ENCODE measurements at regions of chr1 and their contacts with region 1.

Region 1: DNA sequence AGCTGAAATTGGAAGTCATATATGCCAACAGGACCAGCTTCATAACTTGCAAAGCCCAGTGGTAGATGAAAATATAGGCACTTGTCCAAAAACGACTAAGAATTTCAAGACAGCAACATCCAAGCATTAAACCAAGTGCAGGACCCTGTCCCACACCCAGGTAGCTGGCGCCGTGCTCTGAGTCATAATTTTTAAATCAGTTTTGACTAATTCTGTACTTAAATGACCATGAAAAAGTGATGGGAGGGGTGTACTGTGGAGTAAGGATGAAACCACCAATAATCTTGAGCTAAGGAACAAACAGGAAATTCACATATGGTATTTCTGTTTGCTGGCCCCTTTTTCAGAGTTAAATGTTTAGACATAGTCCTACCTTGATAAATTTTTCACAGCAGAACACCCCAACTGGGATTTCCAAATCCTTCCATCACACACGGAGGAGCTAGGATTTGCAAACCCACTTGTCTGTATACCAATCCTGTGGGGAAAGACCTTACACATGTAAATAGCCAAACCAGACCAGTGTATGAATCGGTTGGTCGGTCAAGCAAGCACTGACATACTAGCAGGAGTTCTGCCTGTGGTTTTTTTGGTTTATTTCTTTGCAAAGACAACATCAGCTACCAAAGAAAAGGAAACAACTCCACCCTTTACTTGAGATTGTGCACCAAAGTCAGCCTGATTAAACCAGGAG is 235.7 kb upstream of the RAB4A start:
- DNase-seq: no peak
- H3K4me3 Mint-ChIP-seq: no peak overlapping the region
- H3K27ac Mint-ChIP-seq: no peak overlapping the region
- H3K4me1 Mint-ChIP-seq: peaks cover 29% of the 10 kb centered on the region
- H3K27me3 Mint-ChIP-seq: peaks cover 20% of the 10 kb centered on the region
- CTCF ChIP-seq: no peak

Region 2: GRCh38 chr1:229024528-229025130 is 10.6 kb before region 1 on chr1:
- CTCF ChIA-PET with region 1: interaction called, 5 read pairs
- POLR2A ChIA-PET with region 1: interaction called, 30 read pairs
- intact Hi-C with region 1: no loop called
- DNase-seq: peak; percentile 98
- H3K4me3 Mint-ChIP-seq: no peak overlapping the region
- H3K27ac Mint-ChIP-seq: peak overlapping the region; percentile 21
- H3K4me1 Mint-ChIP-seq: peaks cover 25% of the 10 kb centered on the region
- H3K27me3 Mint-ChIP-seq: peaks cover 11% of the 10 kb centered on the region
- CTCF ChIP-seq: no peak

Region 3: GRCh38 chr1:229048896-229049295 is 13.7 kb after region 1 on chr1:
- CTCF ChIA-PET with region 1: interaction called, 3 read pairs
- POLR2A ChIA-PET with region 1: interaction called, 10 read pairs
- intact Hi-C with region 1: no loop called
- DNase-seq: no peak
- H3K4me3 Mint-ChIP-seq: no peak overlapping the region
- H3K27ac Mint-ChIP-seq: no peak overlapping the region
- H3K4me1 Mint-ChIP-seq: no peaks in the 10 kb centered on the region
- H3K27me3 Mint-ChIP-seq: peaks cover 66% of the 10 kb centered on the region
- CTCF ChIP-seq: no peak

Region 4: DNA sequence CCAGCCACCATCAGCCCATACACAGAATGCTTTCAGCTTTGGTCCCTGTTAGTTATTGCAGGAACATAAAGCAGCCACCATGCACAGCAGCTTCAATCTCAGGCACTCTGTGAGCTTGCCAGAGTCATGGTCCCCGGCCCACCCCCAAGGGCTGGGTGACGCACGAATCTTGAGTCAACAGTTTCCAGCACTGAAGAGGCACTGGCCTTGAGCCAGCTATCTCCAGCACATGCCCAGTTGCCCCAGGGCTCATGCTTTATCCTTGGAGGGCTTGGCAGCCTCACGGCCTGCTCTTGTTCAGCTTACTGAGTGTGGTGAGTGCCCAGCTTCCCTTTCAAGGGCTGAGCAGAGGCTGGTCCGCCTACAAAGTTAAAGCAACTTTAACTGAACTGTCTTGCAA is 35.0 kb after region 1 on chr1:
- CTCF ChIA-PET with region 1: interaction called, 3 read pairs
- POLR2A ChIA-PET with region 1: interaction called, 11 read pairs
- intact Hi-C with region 1: no loop called
- DNase-seq: peak; percentile 100
- H3K4me3 Mint-ChIP-seq: no peak overlapping the region
- H3K27ac Mint-ChIP-seq: no peak overlapping the region
- H3K4me1 Mint-ChIP-seq: peaks cover 23% of the 10 kb centered on the region
- H3K27me3 Mint-ChIP-seq: peaks cover 20% of the 10 kb centered on the region
- CTCF ChIP-seq: no peak

Measured in MCF 10A (cell line).